ENCODE measurements at regions of chr17 and their contacts with region 1.

Region 1: GRCh38 chr17:59619293-59620063 is at the start of gene CLTC:
- DNase-seq: peak; percentile 93
- H3K4me3 Mint-ChIP-seq: peak within 1 kb of the TSS; percentile 89
- H3K27ac Mint-ChIP-seq: peak within 1 kb of the TSS; percentile 99
- H3K4me1 Mint-ChIP-seq: peaks cover 50% of the 10 kb centered on the region
- H3K27me3 Mint-ChIP-seq: no peaks in the 10 kb centered on the region
- total RNA-seq, gene CLTC: 156 to 163 TPM

Region 2: GRCh38 chr17:59361916-59362810 is 257.3 kb before region 1 on chr17:
- CTCF ChIA-PET with region 1: no interaction called
- POLR2A ChIA-PET with region 1: interaction called, 12 read pairs
- DNase-seq: peak; percentile 62
- H3K4me3 Mint-ChIP-seq: peak overlapping the region; percentile 64
- H3K27ac Mint-ChIP-seq: peak overlapping the region; percentile 97
- H3K4me1 Mint-ChIP-seq: peaks cover 83% of the 10 kb centered on the region
- H3K27me3 Mint-ChIP-seq: no peaks in the 10 kb centered on the region

Region 3: DNA sequence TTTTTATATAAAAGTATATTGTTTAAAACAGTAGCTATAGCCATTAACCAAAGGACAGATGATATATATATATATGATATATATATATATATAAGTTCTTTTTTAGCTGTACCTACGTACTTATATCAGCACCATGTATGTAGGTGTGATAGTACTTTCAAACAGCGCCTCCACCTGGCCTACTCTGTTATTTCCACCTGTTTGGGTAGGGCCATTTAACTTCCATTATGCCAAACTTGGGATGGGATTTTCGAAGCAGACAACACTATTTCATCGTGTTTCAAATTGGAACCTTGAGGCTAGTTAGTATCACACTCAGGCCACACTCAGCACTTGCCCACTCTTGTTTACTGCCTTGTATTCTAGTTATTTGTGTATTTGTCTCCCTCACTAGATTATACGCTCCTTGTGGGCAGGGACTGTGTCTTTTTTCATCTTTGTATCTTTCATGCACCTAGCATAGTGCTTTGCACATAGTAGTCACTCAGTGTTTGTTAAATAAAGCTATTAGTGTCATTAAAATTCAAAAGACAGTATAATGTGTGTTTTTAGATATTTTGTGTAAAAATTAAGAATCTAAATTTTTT is 11.6 kb before region 1 on chr17:
- CTCF ChIA-PET with region 1: interaction called, 12 read pairs
- POLR2A ChIA-PET with region 1: interaction called, 35 read pairs
- DNase-seq: peak; percentile 39
- H3K4me3 Mint-ChIP-seq: no peak overlapping the region
- H3K27ac Mint-ChIP-seq: no peak overlapping the region
- H3K4me1 Mint-ChIP-seq: peaks cover 4% of the 10 kb centered on the region
- H3K27me3 Mint-ChIP-seq: no peaks in the 10 kb centered on the region

Region 4: DNA sequence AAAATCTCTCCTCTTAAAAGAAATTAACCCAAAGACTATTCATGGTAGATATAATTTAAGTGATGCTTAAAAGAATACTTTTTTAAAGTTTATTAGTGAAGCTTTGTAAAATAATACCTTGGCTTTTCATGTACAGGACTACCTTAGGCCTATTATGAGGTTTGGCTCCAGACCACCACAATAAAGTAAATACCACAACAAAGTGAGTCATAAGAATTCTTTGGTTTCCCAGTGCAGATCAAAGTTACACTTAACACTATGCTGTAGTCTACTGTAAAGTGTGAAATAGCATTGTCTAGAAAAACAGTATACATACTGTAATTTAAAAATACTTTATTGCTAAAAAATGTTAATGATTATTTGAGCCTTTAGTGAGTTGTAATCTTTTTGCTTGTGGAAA is 31.9 kb after region 1 on chr17:
- CTCF ChIA-PET with region 1: interaction called, 3 read pairs
- POLR2A ChIA-PET with region 1: interaction called, 76 read pairs
- DNase-seq: no peak
- H3K4me3 Mint-ChIP-seq: no peak overlapping the region
- H3K27ac Mint-ChIP-seq: no peak overlapping the region
- H3K4me1 Mint-ChIP-seq: peaks cover 32% of the 10 kb centered on the region
- H3K27me3 Mint-ChIP-seq: no peaks in the 10 kb centered on the region

Region 5: GRCh38 chr17:59707114-59707970 is 87.9 kb after region 1 on chr17 and contains the starts of genes PTRH2 and VMP1:
- CTCF ChIA-PET with region 1: interaction called, 4 read pairs
- POLR2A ChIA-PET with region 1: interaction called, 50 read pairs
- DNase-seq: peak; percentile 95
- H3K4me3 Mint-ChIP-seq: peak within 1 kb of the TSS; percentile 98
- H3K27ac Mint-ChIP-seq: peak within 1 kb of the TSS; percentile 91
- H3K4me1 Mint-ChIP-seq: peaks cover 50% of the 10 kb centered on the region
- H3K27me3 Mint-ChIP-seq: no peaks in the 10 kb centered on the region
- total RNA-seq, gene PTRH2: 22.8 to 23.3 TPM
- total RNA-seq, gene VMP1: 398 to 408 TPM

Region 6: GRCh38 chr17:59829217-59830006 is 209.9 kb after region 1 on chr17:
- CTCF ChIA-PET with region 1: no interaction called
- POLR2A ChIA-PET with region 1: interaction called, 32 read pairs
- DNase-seq: peak; percentile 62
- H3K4me3 Mint-ChIP-seq: peak overlapping the region; percentile 77
- H3K27ac Mint-ChIP-seq: peak overlapping the region; percentile 96
- H3K4me1 Mint-ChIP-seq: peaks cover 77% of the 10 kb centered on the region
- H3K27me3 Mint-ChIP-seq: no peaks in the 10 kb centered on the region

Region 7: DNA sequence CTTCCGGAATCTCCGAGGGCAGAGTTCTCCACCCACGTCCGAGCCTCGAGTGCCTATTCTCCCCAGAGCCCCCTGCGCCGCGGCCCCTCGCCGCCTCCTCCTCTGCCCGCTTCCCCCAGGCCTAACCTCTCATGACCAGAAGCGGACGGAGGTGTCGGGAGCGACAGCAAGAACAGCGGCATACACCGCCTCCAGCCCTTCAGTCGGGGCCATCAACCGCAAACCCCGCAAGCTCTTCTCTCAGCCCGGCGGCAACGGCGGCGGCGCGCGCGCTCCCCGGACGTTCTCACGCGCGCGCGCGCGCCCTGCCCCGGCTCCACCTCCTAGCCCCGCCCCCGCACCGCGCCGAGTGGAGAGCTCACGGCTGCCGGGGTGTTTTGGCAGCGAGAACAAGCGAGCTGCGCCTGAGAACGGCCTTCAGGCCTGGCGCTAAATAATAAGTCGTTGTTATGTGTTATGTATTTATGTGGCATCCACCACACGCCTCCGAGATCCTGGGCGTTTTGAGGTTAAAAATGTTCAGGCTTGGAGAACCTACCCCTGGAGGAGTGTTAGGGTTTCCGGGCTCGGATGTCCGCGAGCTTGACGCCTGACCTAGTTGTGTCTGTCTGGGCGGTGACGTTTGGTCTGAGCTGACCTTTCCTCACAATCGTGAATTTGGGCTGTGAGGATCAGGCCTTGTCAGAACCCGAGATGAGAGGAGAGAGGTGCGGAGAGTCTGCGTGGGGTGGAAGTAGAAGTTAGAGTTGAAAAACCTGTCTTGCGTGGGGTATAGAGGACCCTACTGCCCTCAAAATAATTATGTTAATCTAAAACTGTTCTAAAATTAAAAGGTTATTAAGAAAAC is 345.2 kb after region 1 on chr17 and contains the start of gene RNFT1:
- CTCF ChIA-PET with region 1: no interaction called
- POLR2A ChIA-PET with region 1: interaction called, 12 read pairs
- DNase-seq: peak; percentile 91
- H3K4me3 Mint-ChIP-seq: peak within 1 kb of the TSS; percentile 77
- H3K27ac Mint-ChIP-seq: peak within 1 kb of the TSS; percentile 75
- H3K4me1 Mint-ChIP-seq: peaks cover 19% of the 10 kb centered on the region
- H3K27me3 Mint-ChIP-seq: peaks cover 2% of the 10 kb centered on the region
- total RNA-seq, gene RNFT1: 20.5 to 21.3 TPM